ENCODE measurements at regions of chrX and their contacts with region 1.

Region 1: DNA sequence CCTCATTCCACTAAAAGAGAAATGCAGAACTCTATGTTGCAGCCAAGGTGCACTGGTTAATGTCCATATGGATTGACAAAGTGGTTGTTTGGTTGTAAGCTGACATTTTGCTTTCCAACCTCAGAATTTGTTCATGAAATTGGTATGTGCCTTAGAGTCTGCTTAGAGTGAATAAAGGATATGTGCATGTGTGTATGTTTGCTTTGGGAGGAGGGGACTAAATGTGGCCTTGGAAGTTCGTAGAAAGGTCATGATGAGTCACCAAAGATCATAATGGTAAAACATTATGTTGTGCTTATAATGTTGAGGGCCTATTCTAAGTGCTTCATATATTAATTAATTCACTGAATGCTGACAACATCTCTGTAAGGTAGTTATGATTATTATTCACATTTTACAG is 44.1 kb upstream of the MBNL3 start:
- DNase-seq: peak; percentile 11
- ATAC-seq: peak; percentile 14; the same call in 1 of the 2 replicates
- H3K4me3 ChIP-seq: no peak overlapping the region
- H3K27ac ChIP-seq: no peak overlapping the region
- H3K4me1 ChIP-seq: no peaks in the 10 kb centered on the region
- H3K27me3 ChIP-seq: no peaks in the 10 kb centered on the region
- CTCF ChIP-seq: no peak
- POLR2A ChIP-seq: no peak
- RAD21 ChIP-seq: no peak

Region 2: DNA sequence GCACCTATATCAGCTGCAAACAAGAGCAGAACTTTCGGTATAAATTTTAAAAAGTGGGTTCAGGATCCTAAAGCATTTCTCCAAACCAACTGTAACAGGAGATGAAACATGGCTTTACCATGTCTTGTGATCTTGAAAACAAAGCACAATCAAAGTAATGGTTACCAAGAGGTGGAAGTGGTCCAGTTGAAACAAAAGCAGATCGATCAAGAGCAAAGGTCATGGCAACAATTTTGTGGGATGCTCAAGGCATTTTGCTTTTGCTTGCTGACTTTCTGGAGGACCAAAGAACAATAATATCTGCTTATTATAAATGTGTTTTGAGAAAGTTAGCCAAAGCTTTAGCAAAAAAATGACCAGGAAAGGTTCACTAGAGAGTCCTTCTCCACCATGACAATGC is 196.8 kb before region 1 on chrX:
- CTCF ChIA-PET with region 1: no interaction called
- POLR2A ChIA-PET with region 1: interaction called, 38 read pairs
- dilution Hi-C with region 1: no loop called
- in situ Hi-C with region 1: no loop called
- intact Hi-C with region 1: no loop called
- DNase-seq: no peak
- ATAC-seq: no peak
- H3K4me3 ChIP-seq: no peak overlapping the region
- H3K27ac ChIP-seq: no peak overlapping the region
- H3K4me1 ChIP-seq: no peaks in the 10 kb centered on the region
- H3K27me3 ChIP-seq: no peaks in the 10 kb centered on the region; the same call in 1 of the 2 replicates
- CTCF ChIP-seq: no peak
- POLR2A ChIP-seq: no peak
- RAD21 ChIP-seq: no peak

Region 3: GRCh38 chrX:132393992-132394391 is 139.0 kb before region 1 on chrX:
- CTCF ChIA-PET with region 1: no interaction called
- POLR2A ChIA-PET with region 1: no interaction called
- dilution Hi-C with region 1: no loop called
- in situ Hi-C with region 1: no loop called
- intact Hi-C with region 1: no loop called
- DNase-seq: no peak
- ATAC-seq: no peak
- H3K4me3 ChIP-seq: no peak overlapping the region
- H3K27ac ChIP-seq: no peak overlapping the region
- H3K4me1 ChIP-seq: no peaks in the 10 kb centered on the region
- H3K27me3 ChIP-seq: 0 out of 2 replicates have a peak, but pooled peaks cover 5% of the 10 kb centered on the region
- CTCF ChIP-seq: no peak
- POLR2A ChIP-seq: no peak
- RAD21 ChIP-seq: no peak

Measured in IMR-90 (cell line).